KBM-7 (cell line): ENCODE measurements at regions of chr3 and their contacts with region 1.

Region 1: DNA sequence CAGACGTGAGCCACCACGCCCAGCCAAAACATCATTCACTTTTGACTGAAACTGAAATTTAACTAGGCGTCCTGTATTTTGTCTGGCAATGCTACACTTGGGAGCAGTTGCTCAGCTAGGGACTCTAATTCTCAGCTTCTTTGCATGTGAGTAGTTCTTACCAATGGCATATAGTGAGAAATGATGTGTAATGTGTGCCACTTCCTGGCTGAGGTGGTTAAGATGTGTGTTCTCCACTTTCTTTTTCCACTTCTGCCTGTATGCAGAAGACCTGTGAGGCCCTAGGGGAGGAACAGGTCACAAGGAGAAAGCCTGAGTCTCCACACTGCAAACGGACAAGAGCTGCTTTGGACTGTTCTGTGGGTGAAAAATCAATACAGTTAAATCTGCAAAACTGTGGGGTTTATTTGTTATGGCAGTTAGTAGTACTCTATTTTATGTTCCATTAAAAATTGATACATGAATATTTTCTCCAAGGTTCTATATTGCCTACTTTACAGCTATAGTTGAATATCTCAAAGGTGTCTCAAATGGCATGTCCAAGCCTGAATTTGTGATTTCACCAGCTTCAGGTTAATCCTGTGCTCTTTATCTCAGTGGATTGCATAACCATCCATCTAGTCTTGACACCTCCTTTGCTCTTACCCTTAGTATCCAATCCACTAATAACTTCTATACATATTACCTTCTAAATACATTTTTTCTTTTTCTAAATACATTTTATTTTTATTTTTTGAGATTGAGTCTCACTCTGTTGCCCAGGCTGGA is 59.3 kb downstream of the NR1D2 start:
- DNase-seq: no peak

Region 2: DNA sequence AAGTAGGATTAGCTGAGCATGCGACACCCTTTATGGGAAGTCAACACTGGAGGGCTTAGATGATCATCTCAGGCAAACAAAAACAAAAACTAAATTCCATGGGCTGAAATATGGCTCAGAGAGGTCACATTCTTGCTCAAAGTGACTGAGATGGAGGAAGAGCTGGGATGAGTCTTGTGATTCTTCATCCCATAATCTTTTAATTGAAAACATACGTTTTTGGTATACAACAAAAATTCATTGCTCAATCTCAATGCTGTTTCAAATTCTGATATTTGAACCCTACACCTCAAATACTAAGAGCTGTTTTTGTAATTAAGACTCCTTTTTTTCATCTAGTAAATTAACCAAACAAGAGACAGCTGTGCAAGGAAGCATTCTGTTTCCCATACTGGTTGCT is 197.7 kb after region 1 on chr3:
- in situ Hi-C with region 1: no loop called
- DNase-seq: no peak

Region 3: GRCh38 chr3:24237971-24238767 is 233.8 kb after region 1 on chr3:
- in situ Hi-C with region 1: loop called (anchors 25 kb)
- DNase-seq: peak; percentile 68

Region 4: GRCh38 chr3:24662449-24663345 is 658.3 kb after region 1 on chr3:
- in situ Hi-C with region 1: loop called (anchors 25 kb)
- DNase-seq: no peak